Activated CD8-positive, alpha-beta memory T cell treated with anti-CD3 and anti-CD28 coated beads, Interleukin-2, amount 10 ng/mL, durations not matched to agents 7 days and 5 days (primary cell): ENCODE measurements at regions of chr19 and their contacts with region 1.

Region 1: DNA sequence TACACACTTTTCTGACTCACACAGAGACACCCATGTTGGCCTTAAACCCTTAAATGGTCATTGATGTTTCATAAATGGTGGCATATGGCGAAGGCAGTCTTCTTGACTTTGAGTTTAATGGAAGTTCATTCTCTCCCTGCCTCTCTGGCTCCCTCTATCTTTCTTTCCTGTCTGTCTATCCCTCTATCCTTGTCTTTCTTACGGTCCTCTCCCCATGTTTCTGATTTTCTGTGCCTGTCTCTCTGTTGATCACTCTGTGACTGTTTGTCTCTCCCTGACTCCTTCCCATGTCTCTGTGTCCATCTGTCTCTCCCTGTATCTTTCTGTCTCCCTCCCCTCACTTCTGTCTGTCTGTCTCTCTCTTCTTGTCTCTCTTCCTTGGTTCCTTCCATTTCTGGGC is 43.2 kb upstream of the SHKBP1 start:
- DNase-seq: no peak
- ATAC-seq: no peak
- H3K4me3 Mint-ChIP-seq: no peak overlapping the region
- H3K27ac Mint-ChIP-seq: no peak overlapping the region
- H3K4me1 Mint-ChIP-seq: peaks cover 13% of the 10 kb centered on the region
- H3K27me3 Mint-ChIP-seq: peaks cover 29% of the 10 kb centered on the region

Region 2: GRCh38 chr19:40549007-40549708 is 15.7 kb after region 1 on chr19:
- CTCF ChIA-PET with region 1: interaction called, 10 read pairs
- DNase-seq: peak; percentile 78
- ATAC-seq: peak; percentile 93
- H3K4me3 Mint-ChIP-seq: no peak overlapping the region
- H3K27ac Mint-ChIP-seq: no peak overlapping the region
- H3K4me1 Mint-ChIP-seq: peaks cover 8% of the 10 kb centered on the region
- H3K27me3 Mint-ChIP-seq: peaks cover 52% of the 10 kb centered on the region